RWPE1 (cell line): ENCODE measurements at regions of chr9 and their contacts with region 1.

Region 1: DNA sequence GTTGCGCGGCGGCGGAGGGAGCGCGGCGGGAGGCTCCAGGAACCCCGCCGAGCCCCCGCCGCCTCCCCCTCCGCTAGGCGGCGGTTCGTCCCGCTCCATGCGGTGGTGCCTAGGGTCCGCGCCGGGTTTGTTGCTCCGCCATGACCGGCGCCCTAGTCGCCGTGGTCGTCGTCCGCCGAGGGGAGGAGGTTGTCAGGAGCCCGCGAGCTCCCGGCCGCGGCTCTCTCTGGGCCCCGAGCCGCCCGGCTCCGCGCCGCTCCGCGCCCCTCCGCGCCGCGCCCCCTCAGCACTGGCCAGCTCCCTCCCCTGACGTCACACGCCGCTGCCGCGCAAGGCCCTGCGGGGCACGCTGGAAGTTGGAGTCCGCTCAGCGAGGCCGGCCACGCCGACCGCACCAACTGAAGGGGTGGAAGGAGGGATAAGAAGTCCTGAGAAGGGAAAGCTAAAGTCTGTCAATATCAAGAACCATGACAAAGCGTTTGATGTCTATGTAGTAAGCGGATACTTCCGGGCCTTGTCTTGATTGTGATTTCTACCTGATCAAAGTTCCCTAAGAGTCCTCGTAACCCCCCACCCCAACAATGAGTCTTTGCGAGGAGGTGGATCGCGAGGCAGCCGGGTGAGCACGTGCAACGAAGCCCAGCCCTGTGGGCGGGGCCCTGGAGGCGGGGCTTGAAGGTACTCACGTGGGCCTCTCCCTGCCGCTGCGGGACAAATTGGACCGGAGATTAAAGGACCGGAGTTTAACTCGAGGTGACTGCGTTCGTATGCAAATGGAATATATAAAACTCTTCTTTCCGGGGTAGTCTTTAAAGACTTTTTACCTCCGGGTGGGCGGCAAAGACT is at the start of gene NR6A1:
- DNase-seq: peak; percentile 100
- H3K27ac ChIP-seq: peak within 1 kb of the TSS; percentile 79
- CTCF ChIP-seq: no peak; the same call in 1 of the 2 replicates

Region 2: GRCh38 chr9:124788542-124789217 is 17.4 kb after region 1 on chr9:
- CTCF ChIA-PET with region 1: interaction called, 11 read pairs
- POLR2A ChIA-PET with region 1: no interaction called
- DNase-seq: no peak
- H3K27ac ChIP-seq: peak overlapping the region; percentile 28; the same call in 1 of the 2 replicates
- CTCF ChIP-seq: no peak

Region 3: GRCh38 chr9:124812401-124813016 is 41.3 kb after region 1 on chr9:
- CTCF ChIA-PET with region 1: interaction called, 17 read pairs
- POLR2A ChIA-PET with region 1: no interaction called
- DNase-seq: peak; percentile 96
- H3K27ac ChIP-seq: peak overlapping the region; percentile 94
- CTCF ChIP-seq: no peak

Region 4: DNA sequence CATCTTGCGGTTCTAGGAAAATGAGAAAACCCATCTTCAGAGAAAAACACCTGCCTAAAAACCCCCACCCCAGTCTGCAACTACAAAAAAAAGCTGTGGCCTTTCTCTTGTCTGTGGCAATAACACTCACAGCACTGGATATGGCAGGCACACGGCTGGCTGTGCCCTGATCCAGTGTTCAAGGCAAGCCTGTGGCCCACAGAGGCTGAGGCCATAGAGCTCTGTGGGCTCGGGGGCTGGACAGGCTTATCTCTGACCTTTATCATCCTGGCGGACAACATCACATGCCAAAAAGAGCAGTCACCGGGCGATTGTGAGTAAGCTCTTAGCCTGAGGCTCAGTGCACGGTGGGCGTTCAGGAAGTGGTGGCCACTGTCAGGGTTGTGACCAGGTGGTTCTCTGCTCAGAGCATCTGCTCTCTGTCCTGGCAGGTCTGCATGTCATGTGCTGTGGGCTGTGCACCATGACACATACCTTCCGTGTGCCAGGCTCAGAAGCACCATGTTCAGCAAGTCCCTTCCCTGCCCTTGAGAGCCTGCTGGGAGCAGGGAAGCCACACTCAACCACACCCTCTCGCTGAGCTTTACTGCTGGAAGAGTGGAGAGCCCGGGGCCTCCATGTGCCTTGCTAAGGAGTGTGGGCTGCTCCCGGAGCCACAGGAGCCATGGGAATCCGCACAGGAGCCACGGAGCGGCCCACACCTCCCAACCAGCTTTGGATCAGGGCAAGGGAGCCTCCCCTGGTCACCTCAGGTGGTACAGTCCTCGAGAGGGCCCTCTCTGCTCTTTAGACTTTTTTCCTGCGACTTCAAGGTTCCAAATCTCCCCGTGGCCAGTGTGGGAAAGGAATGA is 47.4 kb after region 1 on chr9:
- CTCF ChIA-PET with region 1: interaction called, 17 read pairs
- POLR2A ChIA-PET with region 1: no interaction called
- DNase-seq: peak; percentile 82
- H3K27ac ChIP-seq: peak overlapping the region; percentile 99
- CTCF ChIP-seq: no peak; the same call in 1 of the 2 replicates

Region 5: DNA sequence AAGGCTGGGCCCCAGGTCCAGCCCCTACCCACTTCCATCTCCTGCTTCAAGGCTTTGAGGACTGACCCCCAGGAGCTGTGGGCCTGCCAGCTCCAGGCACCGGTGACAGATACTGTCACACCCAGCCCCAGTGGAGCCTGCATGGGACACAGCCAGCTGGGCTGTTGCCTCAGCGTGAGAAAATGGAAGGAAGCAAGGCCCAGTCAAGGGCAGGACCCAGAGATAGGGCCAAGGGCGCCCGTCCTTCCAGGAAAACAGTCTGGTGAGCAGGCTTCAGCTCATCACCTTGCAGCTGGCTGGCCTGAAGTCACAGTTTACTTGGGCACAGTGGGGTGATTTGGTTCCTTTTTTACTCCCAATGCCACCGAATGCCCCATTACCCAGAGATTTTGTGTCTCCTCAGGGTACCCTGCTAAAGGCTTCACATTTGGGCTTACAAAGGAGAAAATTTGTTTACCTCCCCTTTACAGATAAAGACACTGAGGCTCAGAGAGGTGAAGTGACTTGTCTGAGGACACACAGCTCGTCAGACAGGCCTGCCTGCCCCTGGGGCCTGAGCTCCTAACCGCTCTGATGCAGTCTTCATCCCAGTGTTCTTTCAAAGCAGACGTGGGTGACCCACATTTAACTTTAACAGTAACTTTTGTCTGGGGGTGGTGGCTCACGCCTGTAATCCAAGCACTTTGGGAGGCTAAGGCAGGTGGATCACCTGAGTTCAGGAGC is 60.6 kb after region 1 on chr9:
- CTCF ChIA-PET with region 1: interaction called, 13 read pairs
- POLR2A ChIA-PET with region 1: no interaction called
- DNase-seq: no peak
- H3K27ac ChIP-seq: peak overlapping the region; percentile 95
- CTCF ChIP-seq: no peak

Region 6: DNA sequence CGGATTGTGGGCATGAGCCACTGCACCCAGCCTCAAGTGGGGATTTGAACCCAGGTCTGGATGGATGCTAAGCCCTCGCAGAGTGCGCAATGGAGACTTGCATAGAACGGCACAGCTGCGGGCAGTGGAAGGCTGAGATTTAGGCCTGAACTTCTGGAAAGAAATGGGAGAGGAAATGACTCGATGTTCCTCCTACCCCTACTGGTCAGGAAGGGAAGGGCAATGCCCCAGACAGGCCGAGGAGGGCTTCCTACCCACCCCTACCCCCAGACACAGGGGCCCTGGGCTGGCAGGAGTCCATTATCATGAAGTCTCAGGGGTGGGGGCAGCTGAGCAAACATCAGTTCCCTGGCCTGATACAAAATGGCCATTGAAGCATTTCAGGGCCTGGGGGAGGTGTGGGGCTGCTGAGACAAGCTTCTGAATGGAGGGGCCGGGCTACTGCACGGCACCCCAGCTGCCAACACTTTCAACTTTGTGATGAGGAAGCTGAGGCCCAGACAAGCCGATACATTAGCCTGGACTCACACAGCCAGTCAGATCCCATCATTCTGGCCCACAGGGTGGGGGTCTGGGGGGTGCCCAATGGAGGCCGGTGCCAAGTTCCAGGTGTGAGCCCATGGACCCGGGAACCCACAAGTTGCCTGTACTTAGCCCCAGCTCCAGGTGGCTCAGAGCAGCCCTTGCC is 68.5 kb after region 1 on chr9:
- CTCF ChIA-PET with region 1: interaction called, 761 read pairs
- POLR2A ChIA-PET with region 1: no interaction called
- DNase-seq: no peak
- H3K27ac ChIP-seq: peak overlapping the region; percentile 22
- CTCF ChIP-seq: no peak; the same call in 1 of the 2 replicates

Region 7: DNA sequence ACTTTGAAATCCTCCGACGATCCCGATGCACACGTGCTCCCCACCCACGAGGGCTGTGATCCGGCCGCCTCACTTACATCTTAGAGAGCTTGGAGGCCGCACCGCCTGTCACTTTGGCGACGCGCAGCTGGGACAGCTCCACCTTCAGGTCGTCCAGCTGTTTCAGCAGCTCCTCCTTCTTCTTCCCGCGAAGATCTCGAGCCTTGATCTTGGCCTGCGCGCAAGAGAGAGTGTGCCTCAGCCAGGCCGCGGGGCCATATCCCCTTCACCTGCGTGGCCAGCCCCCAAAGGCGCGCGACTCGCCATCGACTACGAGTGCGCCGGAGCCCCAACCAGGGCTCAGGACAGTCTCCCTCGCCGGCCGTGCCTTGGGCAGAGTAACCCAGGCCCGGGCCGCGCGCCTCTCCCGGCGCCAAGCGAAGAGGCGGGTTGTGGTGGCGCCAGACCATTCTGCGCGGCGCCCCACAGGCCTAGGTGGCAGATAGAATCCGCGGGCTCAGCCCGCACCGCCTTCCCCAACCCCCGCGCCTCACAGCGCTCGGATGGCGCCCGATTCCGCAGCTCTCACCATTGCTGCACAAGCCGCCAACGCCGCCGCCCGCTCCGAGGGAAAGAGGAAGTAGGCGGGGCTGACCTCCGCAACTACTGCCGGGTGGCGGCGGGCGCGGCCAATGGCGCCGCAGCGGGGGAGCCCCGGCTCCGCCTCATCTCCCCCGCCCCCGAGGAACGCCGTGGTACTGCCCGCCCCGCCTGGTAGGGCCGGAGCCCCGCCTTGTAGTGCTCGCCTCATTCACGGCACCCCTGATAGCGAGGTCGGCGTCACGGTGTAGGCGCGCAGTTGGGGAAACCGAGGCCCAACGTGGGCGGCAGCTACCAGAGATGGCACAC is 90.3 kb after region 1 on chr9 and contains the starts of genes ARPC5L and RPL35:
- CTCF ChIA-PET with region 1: interaction called, 761 read pairs
- POLR2A ChIA-PET with region 1: interaction called, 8 read pairs
- DNase-seq: peak; percentile 100
- H3K27ac ChIP-seq: peak within 1 kb of the TSS; percentile 99
- CTCF ChIP-seq: peak; percentile 51